Lower leg skin (tissue), 4 donors: ENCODE measurements at regions of chr5 and their contacts with region 1.

Region 1: GRCh38 chr5:118653872-118654271 is 334.5 kb downstream of the DTWD2 start:
- DNase-seq: no peak
- H3K4me3 ChIP-seq: no peak overlapping the region
- CTCF ChIP-seq: no peak
- POLR2A ChIP-seq: no peak

Region 2: GRCh38 chr5:118675247-118675646 is 21.4 kb after region 1 on chr5:
- intact Hi-C with region 1: loop called (anchors 1 kb)
- DNase-seq: no peak
- H3K4me3 ChIP-seq: no peak overlapping the region
- CTCF ChIP-seq: no peak
- POLR2A ChIP-seq: no peak